Gastrocnemius medialis (tissue), 4 donors: ENCODE measurements at regions of chr17 and their contacts with region 1.

Region 1: GRCh38 chr17:28812091-28812747 is 30.4 kb downstream of the FAM222B start:
- DNase-seq: peak; percentile 98
- ATAC-seq: peak; percentile 84 to 87
- H3K4me3 ChIP-seq: peak overlapping the region; percentile 79 to 95 (median 89)
- H3K27ac ChIP-seq: peak overlapping the region; percentile 93 to 94 (median 94)
- H3K4me1 ChIP-seq: peaks cover 37 to 44% of the 10 kb centered on the region in 2 donors
- H3K27me3 ChIP-seq: no peaks in the 10 kb centered on the region
- CTCF ChIP-seq: no peak
- POLR2A ChIP-seq: peak; percentile 81 to 85

Region 2: GRCh38 chr17:28896884-28897768 is 84.9 kb after region 1 on chr17 and contains the start of gene FLOT2:
- in situ Hi-C with region 1: no loop called
- intact Hi-C with region 1: loop called (anchors 5 kb)
- DNase-seq: peak; percentile 29 to 53
- ATAC-seq: peak; percentile 63 to 70
- H3K4me3 ChIP-seq: peak within 1 kb of the TSS; percentile 70 to 92 (median 84)
- H3K27ac ChIP-seq: peak within 1 kb of the TSS; percentile 82 to 89 (median 85)
- H3K4me1 ChIP-seq: peaks cover 23 to 26% of the 10 kb centered on the region in 2 donors
- H3K27me3 ChIP-seq: no peaks in the 10 kb centered on the region
- CTCF ChIP-seq: peak; percentile 19 to 51 (median 37)
- POLR2A ChIP-seq: peak; percentile 17 to 43
- total RNA-seq, gene FLOT2: 15.3 to 37.9 (median 28.4) TPM

Region 3: GRCh38 chr17:29059281-29059680 is 247.1 kb after region 1 on chr17:
- in situ Hi-C with region 1: no loop called
- intact Hi-C with region 1: no loop called
- DNase-seq: no peak
- ATAC-seq: no peak
- H3K4me3 ChIP-seq: no peak overlapping the region
- H3K27ac ChIP-seq: no peak overlapping the region
- H3K4me1 ChIP-seq: peaks cover 0 to 7% of the 10 kb centered on the region in 2 donors
- H3K27me3 ChIP-seq: no peaks in the 10 kb centered on the region
- CTCF ChIP-seq: no peak
- POLR2A ChIP-seq: no peak